BJ (cell line): ENCODE measurements at regions of chr20 and their contacts with region 1.

Region 1: DNA sequence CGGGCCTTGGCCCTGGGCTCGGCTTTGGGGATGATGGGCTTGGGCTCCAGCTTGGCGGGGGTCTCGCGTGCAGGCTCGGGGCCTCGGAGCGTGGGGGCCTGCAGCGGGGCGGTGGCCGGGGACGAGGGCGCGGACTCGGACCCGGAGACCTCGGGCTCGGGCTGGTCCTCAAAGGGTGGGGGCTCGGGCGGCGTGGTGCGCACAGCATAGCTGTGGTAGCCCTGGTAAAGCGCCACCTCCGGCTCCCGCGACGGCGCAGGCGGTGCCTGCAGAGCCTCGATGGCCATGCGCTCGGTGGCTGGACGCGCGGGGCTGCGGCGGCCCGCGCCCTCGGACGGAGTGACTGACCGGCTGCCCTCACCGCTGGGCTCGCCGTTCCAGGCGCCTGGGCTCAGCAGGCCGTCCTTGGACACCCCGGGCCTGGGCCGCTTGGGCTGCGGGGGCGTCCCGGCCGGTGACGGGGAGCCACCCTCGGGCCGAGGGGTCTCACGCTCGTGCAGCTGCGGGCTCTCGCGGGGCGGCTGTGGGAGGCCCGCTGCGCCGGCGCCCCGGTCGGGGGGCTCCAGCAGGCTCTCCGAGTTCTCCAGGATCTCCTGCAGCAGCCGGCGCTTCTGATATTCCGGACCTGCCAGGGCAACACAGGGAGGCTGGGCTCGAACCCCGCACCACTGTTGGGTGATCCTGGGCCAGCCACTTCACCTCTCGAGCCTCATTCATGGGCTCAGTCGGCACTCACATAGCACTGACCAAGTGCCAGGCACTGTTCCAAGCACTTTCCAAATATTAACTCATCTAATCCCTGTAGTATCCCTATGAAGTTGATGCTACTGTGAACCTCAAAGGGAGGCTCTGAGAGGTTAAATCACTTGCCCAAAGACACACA is 71.0 kb downstream of the JPH2 start:
- DNase-seq: no peak
- H3K4me3 ChIP-seq: no peak overlapping the region
- H3K27me3 ChIP-seq: no peaks in the 10 kb centered on the region
- CTCF ChIP-seq: no peak

Region 2: DNA sequence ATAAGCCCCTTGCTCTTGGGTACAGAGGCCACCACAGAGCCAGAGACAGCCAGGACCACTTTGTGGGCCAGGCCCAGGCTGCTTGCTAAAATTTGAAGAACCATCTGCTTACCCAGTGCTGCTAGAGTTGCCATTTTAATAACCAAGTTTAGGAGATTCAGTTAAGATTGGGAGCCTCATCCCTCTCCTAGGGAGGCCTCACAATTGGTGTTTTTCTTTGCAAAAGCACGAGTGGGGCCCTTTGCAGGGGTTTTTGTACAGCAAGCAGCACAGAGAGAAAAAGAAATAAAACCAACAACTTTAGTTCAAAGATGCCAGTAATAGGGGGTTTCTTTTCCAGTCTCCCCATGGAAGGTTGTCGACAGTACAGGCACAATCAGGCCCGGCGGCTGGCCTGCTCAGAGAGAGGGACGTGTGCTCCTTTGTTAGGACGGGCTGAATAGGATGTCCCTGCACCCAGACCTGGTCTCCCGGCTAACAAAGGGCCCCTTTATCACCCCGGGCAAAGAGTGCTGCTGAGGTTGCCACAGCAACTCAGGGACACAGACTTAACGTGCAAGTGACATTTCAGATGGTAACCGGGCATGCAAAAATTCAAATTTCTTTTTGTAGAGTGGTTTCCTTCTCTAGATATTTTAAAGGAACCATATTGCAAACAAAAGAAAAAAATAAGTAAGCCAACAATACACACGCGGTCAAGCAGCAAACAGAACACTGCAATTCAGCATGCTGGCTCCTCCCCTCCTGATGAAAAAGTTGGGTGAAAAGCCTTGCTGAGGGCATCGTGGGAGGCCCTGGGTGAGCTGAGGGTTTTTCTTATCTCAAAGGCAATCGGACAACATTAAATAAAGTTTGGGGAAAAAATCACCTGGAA is 211.8 kb before region 1 on chr20:
- CTCF ChIA-PET with region 1: no interaction called
- POLR2A ChIA-PET with region 1: no interaction called
- DNase-seq: no peak
- H3K4me3 ChIP-seq: no peak overlapping the region
- H3K27me3 ChIP-seq: no peaks in the 10 kb centered on the region
- CTCF ChIP-seq: no peak

Region 3: GRCh38 chr20:44092551-44093248 is 23.3 kb before region 1 on chr20:
- CTCF ChIA-PET with region 1: interaction called, 13 read pairs
- POLR2A ChIA-PET with region 1: no interaction called
- DNase-seq: no peak
- H3K4me3 ChIP-seq: no peak overlapping the region
- H3K27me3 ChIP-seq: no peaks in the 10 kb centered on the region
- CTCF ChIP-seq: peak; percentile 64

Region 4: GRCh38 chr20:44129911-44130718 is 14.1 kb after region 1 on chr20:
- CTCF ChIA-PET with region 1: interaction called, 29 read pairs
- POLR2A ChIA-PET with region 1: no interaction called
- DNase-seq: no peak
- H3K4me3 ChIP-seq: no peak overlapping the region
- H3K27me3 ChIP-seq: no peaks in the 10 kb centered on the region
- CTCF ChIP-seq: no peak

Region 5: DNA sequence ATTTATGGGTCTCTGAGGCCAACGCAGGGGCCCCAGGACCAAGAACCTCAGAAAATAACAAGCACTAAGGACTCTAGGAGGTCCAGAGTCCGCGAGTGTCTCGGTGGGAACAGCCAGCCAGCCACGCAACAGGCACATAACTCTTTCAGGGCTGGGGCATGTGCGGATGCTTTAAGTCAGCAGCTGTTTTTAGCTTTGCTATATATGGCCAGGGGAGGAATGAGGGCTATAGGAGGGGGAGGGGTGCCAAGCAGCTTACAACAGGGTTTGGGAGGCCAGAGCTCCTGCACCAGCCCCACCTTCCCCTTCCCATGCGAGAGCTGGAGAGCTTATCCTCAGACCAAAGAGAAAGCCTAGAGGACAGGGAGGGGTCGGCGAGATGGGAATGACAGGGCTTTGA is 64.8 kb after region 1 on chr20:
- CTCF ChIA-PET with region 1: interaction called, 307 read pairs
- POLR2A ChIA-PET with region 1: no interaction called
- DNase-seq: no peak
- H3K4me3 ChIP-seq: no peak overlapping the region
- H3K27me3 ChIP-seq: no peaks in the 10 kb centered on the region
- CTCF ChIP-seq: no peak

Region 6: GRCh38 chr20:44310664-44311639 is 194.9 kb after region 1 on chr20 and contains the start of gene FITM2:
- CTCF ChIA-PET with region 1: interaction called, 22 read pairs
- POLR2A ChIA-PET with region 1: no interaction called
- DNase-seq: peak; percentile 68
- H3K4me3 ChIP-seq: peak within 1 kb of the TSS; percentile 59
- H3K27me3 ChIP-seq: no peaks in the 10 kb centered on the region
- CTCF ChIP-seq: peak; percentile 99
- polyA plus RNA-seq, gene FITM2: 3.8 and 6.7 TPM in 2 replicates